ENCODE measurements at regions of chr15 and their contacts with region 1.

Region 1: GRCh38 chr15:63188926-63189871 is at the start of gene RAB8B:
- DNase-seq: peak; percentile 99
- H3K4me3 Mint-ChIP-seq: peak within 1 kb of the TSS; percentile 92
- H3K27ac Mint-ChIP-seq: peak within 1 kb of the TSS; percentile 92
- H3K4me1 Mint-ChIP-seq: peaks cover 39% of the 10 kb centered on the region
- H3K27me3 Mint-ChIP-seq: peaks cover 6% of the 10 kb centered on the region
- total RNA-seq, gene RAB8B: 186 and 187 TPM in 2 replicates

Region 2: DNA sequence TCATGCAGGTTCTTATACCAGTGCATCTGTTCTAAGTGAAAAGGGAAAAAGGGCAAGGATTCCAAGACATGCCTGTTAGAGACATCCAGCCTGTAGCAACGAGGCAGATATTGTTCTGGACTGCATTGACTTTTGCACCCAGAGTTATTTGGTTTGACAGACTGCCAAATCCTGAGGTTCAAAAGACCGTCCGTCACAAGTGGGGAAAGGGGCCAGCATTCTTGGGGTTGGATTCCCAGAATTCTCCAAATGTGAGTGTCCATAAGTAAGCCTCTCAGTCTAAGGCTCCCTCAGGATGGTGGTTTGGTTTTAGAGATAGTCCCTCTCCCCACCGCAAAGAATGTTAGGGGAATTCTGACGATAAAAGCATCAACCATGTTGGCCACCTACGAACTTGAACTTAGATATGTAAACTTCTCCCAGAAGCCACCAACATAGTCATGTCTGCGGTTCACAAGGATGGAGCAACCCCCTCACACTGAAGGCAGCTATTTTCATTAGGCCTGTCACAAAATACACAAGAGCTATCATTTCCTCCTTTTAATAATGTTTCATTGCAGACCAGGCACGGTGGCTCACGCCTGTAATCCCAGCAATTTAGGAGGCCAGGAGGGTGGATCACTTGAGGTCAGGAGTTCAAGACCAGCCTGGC is 81.2 kb before region 1 on chr15:
- intact Hi-C with region 1: no loop called
- DNase-seq: no peak
- H3K4me3 Mint-ChIP-seq: no peak overlapping the region
- H3K27ac Mint-ChIP-seq: no peak overlapping the region
- H3K4me1 Mint-ChIP-seq: no peaks in the 10 kb centered on the region
- H3K27me3 Mint-ChIP-seq: peaks cover 19% of the 10 kb centered on the region

Region 3: GRCh38 chr15:63122002-63122893 is 67.0 kb before region 1 on chr15:
- intact Hi-C with region 1: loop called (anchors 1 kb)
- DNase-seq: peak; percentile 95
- H3K4me3 Mint-ChIP-seq: peak overlapping the region; percentile 94
- H3K27ac Mint-ChIP-seq: peak overlapping the region; percentile 85
- H3K4me1 Mint-ChIP-seq: peaks cover 8% of the 10 kb centered on the region
- H3K27me3 Mint-ChIP-seq: no peaks in the 10 kb centered on the region

Region 4: DNA sequence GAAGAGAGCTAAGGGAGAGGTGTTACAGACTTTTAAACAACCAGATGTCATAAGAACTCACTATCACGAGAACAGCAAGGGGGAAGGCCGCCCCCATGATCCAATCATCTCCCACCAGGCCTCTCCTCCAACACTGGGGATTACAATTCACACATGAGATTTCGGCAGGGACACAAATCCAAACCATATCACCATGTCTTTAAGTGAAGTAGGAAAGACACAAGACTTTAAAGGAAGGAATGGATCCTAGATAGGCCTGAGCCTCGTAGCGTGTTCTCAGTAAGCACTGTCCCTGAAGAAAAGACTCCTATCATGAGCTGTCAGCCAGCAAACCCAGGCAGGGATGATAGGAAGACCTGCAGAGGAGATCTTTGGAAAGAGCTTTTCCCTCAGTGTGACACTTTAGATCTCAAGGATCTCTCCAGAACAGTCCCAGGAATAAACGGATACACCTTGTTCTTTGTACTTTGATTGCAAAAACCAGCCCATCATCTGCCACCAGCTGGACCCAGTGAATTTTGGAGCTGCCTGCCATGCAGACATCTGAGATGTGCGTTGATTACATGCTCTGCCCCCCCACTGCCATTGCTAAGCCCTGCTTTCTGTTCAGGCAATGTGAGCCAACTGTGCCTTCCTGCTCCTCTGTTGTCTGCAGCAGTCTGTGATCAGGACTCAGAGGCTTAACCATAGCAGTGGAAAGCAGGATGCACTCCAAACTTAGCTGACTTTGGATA is 16.7 kb before region 1 on chr15:
- intact Hi-C with region 1: loop called (anchors 1 kb)
- DNase-seq: no peak
- H3K4me3 Mint-ChIP-seq: no peak overlapping the region
- H3K27ac Mint-ChIP-seq: no peak overlapping the region
- H3K4me1 Mint-ChIP-seq: peaks cover 3% of the 10 kb centered on the region
- H3K27me3 Mint-ChIP-seq: no peaks in the 10 kb centered on the region

Region 5: GRCh38 chr15:63223463-63223862 is 34.3 kb after region 1 on chr15:
- intact Hi-C with region 1: no loop called
- DNase-seq: no peak
- H3K4me3 Mint-ChIP-seq: no peak overlapping the region
- H3K27ac Mint-ChIP-seq: no peak overlapping the region
- H3K4me1 Mint-ChIP-seq: peaks cover 50% of the 10 kb centered on the region
- H3K27me3 Mint-ChIP-seq: no peaks in the 10 kb centered on the region

Region 6: DNA sequence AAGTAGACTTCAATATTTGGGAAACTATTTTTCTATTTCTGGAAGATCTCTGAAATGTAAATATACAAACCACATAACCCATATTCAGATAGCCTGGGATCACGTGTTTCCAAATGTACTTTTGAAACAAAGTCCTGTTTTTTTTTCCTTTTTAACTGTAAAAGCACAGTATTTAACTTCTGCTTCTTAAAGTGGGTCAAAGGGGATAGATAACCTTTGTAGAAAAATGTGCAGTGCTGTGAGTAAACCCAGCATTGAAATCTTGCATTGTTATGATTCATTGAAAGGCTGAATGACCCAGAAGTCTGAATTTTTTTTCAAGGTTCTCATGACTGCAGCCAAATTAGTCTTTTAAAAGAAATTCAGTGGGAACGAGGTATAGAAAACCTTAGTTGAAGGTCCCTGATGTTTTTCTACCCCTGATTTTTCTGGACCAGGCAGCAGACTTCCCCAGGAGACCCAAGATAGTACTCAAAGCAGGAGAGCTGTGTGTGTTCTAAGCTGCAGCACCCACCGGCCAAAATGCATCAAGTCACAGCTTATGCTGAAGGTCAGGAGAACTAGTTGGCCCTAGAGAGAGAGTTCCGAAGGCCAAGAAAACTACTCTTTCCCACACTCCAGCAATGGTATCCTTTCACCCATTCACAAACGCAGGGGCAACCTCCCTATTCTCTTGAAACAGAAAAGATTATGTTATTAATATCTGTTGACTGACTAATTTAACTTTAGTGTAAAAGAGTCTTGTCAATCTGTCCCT is 44.6 kb after region 1 on chr15:
- intact Hi-C with region 1: loop called (anchors 2 kb)
- DNase-seq: no peak
- H3K4me3 Mint-ChIP-seq: no peak overlapping the region
- H3K27ac Mint-ChIP-seq: peak overlapping the region; percentile 66
- H3K4me1 Mint-ChIP-seq: peaks cover 50% of the 10 kb centered on the region
- H3K27me3 Mint-ChIP-seq: no peaks in the 10 kb centered on the region

Region 7: GRCh38 chr15:63374686-63375520 is 185.7 kb after region 1 on chr15:
- intact Hi-C with region 1: loop called (anchors 5 kb)
- DNase-seq: peak; percentile 74
- H3K4me3 Mint-ChIP-seq: peak overlapping the region; percentile 59
- H3K27ac Mint-ChIP-seq: peak overlapping the region; percentile 75
- H3K4me1 Mint-ChIP-seq: peaks cover 50% of the 10 kb centered on the region
- H3K27me3 Mint-ChIP-seq: peaks cover 14% of the 10 kb centered on the region

Measured in activated CD4-positive, alpha-beta T cell treated with anti-CD3 and anti-CD28 coated beads, Interleukin-2, amount 10 ng/mL, durations not matched to agents 24 days and 14 days (primary cell).